ENCODE measurements at regions of chr11 and their contacts with region 1.

Region 1: GRCh38 chr11:134253188-134253993 is at the starts of genes ACAD8 and THYN1:
- DNase-seq: peak; percentile 98
- total RNA-seq, gene ACAD8: 33.9 TPM
- total RNA-seq, gene THYN1: 32.9 TPM

Region 2: GRCh38 chr11:134223836-134224709 is 29.3 kb before region 1 on chr11 and contains the starts of genes NCAPD3 and VPS26B:
- intact Hi-C with region 1: loop called (anchors 2 kb)
- DNase-seq: peak; percentile 98
- total RNA-seq, gene NCAPD3: 17.5 TPM
- total RNA-seq, gene VPS26B: 39.5 TPM

Measured in cardiac septum (tissue), 1 donor.